Activated naive CD4-positive, alpha-beta T cell treated with anti-CD3 and anti-CD28 coated beads for 36 hours (primary cell): ENCODE measurements at regions of chr3 and their contacts with region 1.

Region 1: GRCh38 chr3:140898340-140899180 is 43.1 kb upstream of the SLC25A36 start:
- DNase-seq: peak; percentile 26
- H3K4me3 Mint-ChIP-seq: no peak overlapping the region
- H3K27ac Mint-ChIP-seq: no peak overlapping the region
- H3K4me1 Mint-ChIP-seq: no peaks in the 10 kb centered on the region
- H3K27me3 Mint-ChIP-seq: peaks cover 11% of the 10 kb centered on the region

Region 2: DNA sequence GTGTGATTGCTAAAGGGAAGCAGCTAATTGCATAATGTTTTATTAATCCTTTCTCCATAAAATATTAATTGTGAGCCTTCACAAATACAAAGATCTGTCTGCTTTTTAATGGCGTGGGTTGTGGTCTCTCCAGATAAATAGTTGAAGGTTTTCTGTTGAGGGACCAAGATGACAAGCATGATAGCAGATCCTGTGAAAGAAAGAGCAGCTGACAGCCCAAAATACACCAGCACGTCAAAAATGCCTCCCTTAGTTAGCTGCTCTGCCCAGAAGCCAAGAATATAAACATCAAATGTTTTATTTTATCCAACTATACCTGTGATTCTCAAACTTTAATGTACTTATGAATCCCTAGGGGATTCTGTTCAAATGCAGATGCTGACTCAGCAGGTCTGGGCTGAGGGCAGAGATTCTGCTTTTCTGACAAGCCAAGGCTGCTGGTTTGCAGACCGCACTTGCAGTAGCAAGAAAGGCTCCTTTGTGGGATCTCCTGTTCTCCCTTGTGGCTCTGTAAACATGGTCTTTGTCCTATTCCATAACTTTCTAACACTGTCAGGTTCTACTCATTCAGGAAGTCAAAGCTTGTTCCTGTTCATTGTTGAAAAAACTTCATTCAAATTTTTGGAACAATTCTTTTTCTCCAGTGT is 76.0 kb before region 1 on chr3:
- CTCF ChIA-PET with region 1: no interaction called
- intact Hi-C with region 1: no loop called
- DNase-seq: no peak
- H3K4me3 Mint-ChIP-seq: no peak overlapping the region
- H3K27ac Mint-ChIP-seq: no peak overlapping the region
- H3K4me1 Mint-ChIP-seq: no peaks in the 10 kb centered on the region
- H3K27me3 Mint-ChIP-seq: peaks cover 4% of the 10 kb centered on the region

Region 3: DNA sequence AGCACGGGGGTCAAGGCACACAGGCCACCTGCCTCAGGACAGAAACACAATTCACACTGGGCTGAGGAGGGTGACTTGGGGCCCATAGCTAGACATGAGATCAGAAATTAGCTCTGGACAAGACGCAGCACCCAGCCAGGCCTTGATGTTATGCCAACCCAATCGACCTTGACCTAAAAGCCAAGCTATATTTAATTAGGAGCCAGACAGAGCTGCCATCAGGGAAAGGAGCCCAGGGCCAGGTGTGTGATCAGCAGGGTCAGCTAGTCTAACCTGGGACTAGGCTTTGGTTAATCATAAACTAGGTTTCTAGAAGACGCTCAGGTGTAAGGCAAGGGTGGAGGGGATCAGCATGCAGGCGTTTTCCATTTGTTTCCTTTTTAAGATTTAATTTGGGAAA is 19.2 kb after region 1 on chr3:
- CTCF ChIA-PET with region 1: no interaction called
- intact Hi-C with region 1: no loop called
- DNase-seq: no peak
- H3K4me3 Mint-ChIP-seq: no peak overlapping the region
- H3K27ac Mint-ChIP-seq: no peak overlapping the region
- H3K4me1 Mint-ChIP-seq: no peaks in the 10 kb centered on the region
- H3K27me3 Mint-ChIP-seq: peaks cover 8% of the 10 kb centered on the region

Region 4: DNA sequence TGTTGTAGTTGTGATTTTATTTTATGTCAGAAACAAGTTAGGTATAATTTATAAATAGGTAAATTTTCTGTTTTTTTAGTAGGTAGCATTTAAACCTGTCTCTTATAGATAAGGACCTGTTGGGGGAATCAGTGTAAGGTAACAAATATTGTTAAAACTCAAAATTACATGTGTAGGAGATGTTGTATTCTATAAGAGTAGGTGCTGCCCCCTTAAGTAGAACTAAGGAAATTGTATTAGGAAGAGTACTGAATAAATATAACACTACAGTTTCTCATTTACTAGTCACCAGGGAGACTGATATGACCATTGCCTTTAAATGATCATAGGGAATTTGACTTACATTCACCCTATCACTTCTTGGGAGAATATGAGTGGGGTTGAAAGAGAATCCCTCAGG is 74.3 kb after region 1 on chr3:
- CTCF ChIA-PET with region 1: interaction called, 8 read pairs
- intact Hi-C with region 1: loop called (anchors 1 kb)
- DNase-seq: no peak
- H3K4me3 Mint-ChIP-seq: no peak overlapping the region
- H3K27ac Mint-ChIP-seq: no peak overlapping the region
- H3K4me1 Mint-ChIP-seq: peaks cover 4% of the 10 kb centered on the region
- H3K27me3 Mint-ChIP-seq: no peaks in the 10 kb centered on the region

Region 5: GRCh38 chr3:141000027-141000663 is 101.6 kb after region 1 on chr3:
- CTCF ChIA-PET with region 1: interaction called, 11 read pairs
- intact Hi-C with region 1: loop called (anchors 1 kb)
- DNase-seq: peak; percentile 73
- H3K4me3 Mint-ChIP-seq: no peak overlapping the region
- H3K27ac Mint-ChIP-seq: no peak overlapping the region
- H3K4me1 Mint-ChIP-seq: peaks cover 4% of the 10 kb centered on the region
- H3K27me3 Mint-ChIP-seq: no peaks in the 10 kb centered on the region

Region 6: DNA sequence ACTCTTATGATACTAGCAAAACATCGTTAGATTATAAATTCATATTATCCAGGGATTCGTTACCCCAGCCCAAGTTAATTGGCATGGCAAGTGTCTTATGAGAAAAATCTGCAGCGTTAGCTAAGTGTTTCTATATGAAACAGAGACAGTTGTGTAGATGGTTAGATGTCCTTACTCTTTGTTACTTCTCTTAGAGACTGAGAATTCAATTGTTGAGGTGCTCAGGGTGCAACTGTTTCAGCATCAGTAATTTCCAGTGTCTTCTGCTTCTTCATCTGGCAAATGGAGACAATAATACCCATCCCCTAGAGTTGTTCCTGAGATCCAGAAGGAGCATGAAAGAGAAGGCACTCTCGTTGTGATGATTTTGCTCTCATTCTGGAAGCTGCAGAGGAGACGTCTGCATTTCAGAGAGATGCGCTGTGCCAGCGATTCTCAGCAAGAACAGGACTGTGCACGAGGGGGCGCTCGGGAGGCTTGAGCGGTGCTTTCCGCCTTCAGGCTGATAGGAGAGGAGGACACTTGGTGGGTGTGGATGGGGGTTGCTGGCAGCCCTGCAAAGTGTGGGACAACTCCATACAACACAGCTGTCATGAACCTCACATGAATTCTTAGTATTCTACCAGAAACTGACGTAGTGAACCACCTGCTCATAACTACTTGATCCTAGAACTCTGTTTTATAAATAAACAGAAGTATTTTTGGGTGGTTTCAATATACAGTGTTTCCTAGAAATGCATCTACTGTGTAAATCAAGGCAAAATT is 112.9 kb after region 1 on chr3:
- CTCF ChIA-PET with region 1: no interaction called
- intact Hi-C with region 1: loop called (anchors 1 kb)
- DNase-seq: peak; percentile 91
- H3K4me3 Mint-ChIP-seq: no peak overlapping the region
- H3K27ac Mint-ChIP-seq: no peak overlapping the region
- H3K4me1 Mint-ChIP-seq: peaks cover 5% of the 10 kb centered on the region
- H3K27me3 Mint-ChIP-seq: peaks cover 12% of the 10 kb centered on the region

Region 7: DNA sequence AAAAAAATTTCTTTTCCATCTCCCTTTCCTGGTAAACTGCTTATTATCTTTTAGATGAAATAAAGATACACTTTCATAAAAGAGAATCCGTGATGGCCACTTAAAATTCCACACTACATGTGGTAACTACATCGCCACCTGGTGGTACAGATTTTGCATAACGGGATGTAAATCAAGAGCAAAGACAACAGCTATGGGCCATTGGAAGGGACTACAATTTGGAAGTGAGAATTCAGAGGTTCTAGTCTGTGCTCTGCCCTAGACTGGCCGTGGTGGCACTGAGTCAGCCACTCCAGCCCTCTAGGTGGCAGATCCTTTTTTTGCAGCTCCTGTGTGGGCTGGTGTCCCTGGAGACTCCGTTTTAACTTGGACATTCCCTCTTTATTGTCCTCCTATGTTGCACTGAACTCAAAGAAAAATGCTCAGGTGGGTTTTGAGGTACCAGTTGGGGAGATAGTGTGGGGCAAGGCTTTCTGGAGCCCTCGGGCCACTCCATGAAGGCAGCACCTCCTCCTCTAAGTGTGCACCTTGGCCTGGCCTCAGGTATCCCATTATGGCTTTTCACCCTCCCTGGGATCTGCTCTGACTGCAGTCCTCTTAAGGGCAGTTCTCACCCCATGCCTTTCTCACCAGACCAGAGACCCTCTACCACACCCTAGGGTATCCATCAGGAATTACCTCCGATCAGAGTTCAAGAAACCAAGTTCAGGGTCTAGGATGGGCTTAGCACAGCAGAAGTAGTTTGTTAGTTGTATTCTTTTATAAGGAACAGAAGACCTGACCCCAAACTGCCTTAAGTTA is 207.5 kb after region 1 on chr3:
- CTCF ChIA-PET with region 1: interaction called, 7 read pairs
- intact Hi-C with region 1: loop called (anchors 1 kb)
- DNase-seq: peak; percentile 84
- H3K4me3 Mint-ChIP-seq: no peak overlapping the region
- H3K27ac Mint-ChIP-seq: no peak overlapping the region
- H3K4me1 Mint-ChIP-seq: no peaks in the 10 kb centered on the region
- H3K27me3 Mint-ChIP-seq: no peaks in the 10 kb centered on the region

Region 8: DNA sequence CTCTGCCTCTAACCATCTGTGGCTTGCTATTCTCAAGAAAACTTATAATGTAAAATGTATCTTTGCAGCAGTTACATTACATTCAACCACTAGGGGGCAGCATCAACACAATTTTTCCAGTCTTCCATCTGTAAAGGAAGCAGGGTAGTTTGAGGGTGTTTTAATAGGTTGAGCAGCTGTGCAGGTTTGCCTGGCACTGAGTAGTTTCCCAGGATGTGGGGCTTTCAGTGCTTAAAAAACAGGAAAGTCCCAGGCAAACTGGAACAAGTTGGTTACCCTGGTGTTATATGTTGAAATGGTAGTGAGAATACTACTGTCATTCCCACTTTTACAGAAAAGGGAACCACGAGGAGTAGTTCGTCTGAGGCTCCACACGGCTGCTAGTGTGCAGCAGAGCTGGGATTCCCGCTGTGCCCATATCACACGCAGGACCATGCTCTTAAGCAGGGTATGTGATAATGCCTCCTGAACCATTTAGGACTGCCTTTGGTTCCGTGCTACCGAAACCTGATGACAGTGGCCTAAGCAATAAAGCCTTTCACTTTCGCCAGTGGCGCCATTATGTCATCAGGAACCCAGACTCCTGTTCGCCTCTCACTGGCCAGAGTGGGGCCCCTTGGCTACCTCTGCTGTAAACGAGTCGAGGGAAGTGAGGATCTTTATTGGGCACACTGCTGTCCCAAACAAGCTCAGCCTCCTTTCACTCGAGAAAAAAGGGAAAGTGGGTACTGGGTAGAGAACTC is 405.1 kb after region 1 on chr3:
- CTCF ChIA-PET with region 1: no interaction called
- intact Hi-C with region 1: no loop called
- DNase-seq: peak; percentile 85
- H3K4me3 Mint-ChIP-seq: no peak overlapping the region
- H3K27ac Mint-ChIP-seq: no peak overlapping the region
- H3K4me1 Mint-ChIP-seq: peaks cover 55% of the 10 kb centered on the region
- H3K27me3 Mint-ChIP-seq: no peaks in the 10 kb centered on the region